HEK293 (cell line): ENCODE measurements at regions of chr1 and their contacts with region 1.

Region 1: GRCh38 chr1:24847995-24848881 is 81.8 kb downstream of the RUNX3 start:
- H3K4me3 ChIP-seq: peak overlapping the region; percentile 51
- H3K27ac ChIP-seq: peak overlapping the region; percentile 72; the same call in 1 of the 2 replicates
- H3K4me1 ChIP-seq: peaks cover 5% of the 10 kb centered on the region
- CTCF ChIP-seq: peak; percentile 95

Region 2: GRCh38 chr1:24830680-24831272 is 17.5 kb before region 1 on chr1:
- CTCF ChIA-PET with region 1: interaction called, 16 read pairs
- POLR2A ChIA-PET with region 1: no interaction called
- H3K4me3 ChIP-seq: no peak overlapping the region
- H3K27ac ChIP-seq: no peak overlapping the region
- H3K4me1 ChIP-seq: peaks cover 21% of the 10 kb centered on the region
- CTCF ChIP-seq: no peak; the same call in 1 of the 2 replicates

Region 3: DNA sequence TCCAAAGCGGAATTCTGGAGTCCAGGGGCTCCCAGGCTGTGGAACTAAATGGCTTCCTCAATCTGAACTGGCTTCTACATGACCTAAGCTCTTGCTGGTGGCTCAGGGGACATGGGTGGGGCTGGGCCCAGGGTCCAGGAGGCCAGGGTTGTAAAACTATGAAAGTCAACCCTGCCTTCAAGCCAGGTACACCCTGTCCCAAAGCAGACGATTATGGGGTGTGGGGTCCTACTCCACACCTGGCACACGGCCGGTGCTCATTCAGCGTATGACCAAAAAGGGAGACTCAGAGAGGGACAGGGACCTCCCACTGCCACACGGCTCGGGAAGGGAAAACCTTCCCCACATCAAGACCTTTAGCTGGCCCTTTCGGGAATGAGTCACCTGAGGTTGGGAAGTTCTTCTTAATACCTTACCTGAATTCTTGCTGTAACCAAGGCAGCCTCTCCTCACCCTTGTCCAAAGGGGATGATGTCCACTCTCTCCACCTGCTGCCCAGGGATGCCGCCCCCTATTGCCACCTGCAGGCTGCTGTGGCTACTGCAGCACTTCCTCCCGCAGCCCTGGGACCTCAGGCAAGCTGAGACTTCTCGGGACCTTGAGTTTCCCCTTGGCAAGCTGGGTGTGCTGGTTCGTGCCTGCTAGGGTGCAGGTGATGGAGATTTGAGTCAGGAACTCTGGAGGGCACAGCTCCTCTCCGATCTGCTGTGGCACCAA is 49.7 kb after region 1 on chr1:
- CTCF ChIA-PET with region 1: interaction called, 15 read pairs
- POLR2A ChIA-PET with region 1: no interaction called
- H3K4me3 ChIP-seq: no peak overlapping the region
- H3K27ac ChIP-seq: no peak overlapping the region
- H3K4me1 ChIP-seq: no peaks in the 10 kb centered on the region
- CTCF ChIP-seq: peak; percentile 83

Region 4: GRCh38 chr1:25037174-25038074 is 189.2 kb after region 1 on chr1:
- CTCF ChIA-PET with region 1: interaction called, 28 read pairs
- POLR2A ChIA-PET with region 1: no interaction called
- H3K4me3 ChIP-seq: no peak overlapping the region
- H3K27ac ChIP-seq: no peak overlapping the region
- H3K4me1 ChIP-seq: no peaks in the 10 kb centered on the region
- CTCF ChIP-seq: peak; percentile 45; the same call in 1 of the 2 replicates

Region 5: DNA sequence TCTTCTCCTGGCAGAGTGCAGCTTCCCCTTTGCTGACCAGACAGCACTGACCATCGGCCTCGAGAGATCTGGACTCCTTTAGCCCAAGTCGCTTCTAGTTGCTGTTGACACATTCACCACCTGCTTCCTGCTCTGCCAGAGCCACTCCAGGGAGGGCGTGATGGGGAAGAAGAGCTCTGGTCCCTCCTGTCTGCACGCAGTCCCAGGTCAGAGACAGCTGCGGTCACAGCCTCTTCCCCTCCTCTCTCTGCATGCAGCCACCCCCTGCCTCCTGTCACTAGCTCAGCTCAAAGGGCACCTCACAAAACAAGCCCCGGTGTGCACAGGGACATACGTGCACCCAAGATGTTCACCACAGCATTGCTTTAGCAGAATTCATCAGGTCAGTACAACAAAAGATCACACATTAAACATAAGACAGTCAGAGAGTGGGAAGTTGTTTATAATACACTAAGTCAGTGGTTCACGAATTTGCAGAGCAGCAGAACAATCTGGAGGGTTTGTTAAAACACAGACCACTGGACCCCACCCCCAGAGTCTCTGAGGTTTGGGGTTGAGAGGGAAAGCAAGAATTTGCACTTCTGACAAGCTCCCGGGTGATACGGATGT is 251.2 kb after region 1 on chr1:
- CTCF ChIA-PET with region 1: interaction called, 39 read pairs
- POLR2A ChIA-PET with region 1: no interaction called
- H3K4me3 ChIP-seq: no peak overlapping the region
- H3K27ac ChIP-seq: no peak overlapping the region
- H3K4me1 ChIP-seq: no peaks in the 10 kb centered on the region
- CTCF ChIP-seq: no peak

Region 6: DNA sequence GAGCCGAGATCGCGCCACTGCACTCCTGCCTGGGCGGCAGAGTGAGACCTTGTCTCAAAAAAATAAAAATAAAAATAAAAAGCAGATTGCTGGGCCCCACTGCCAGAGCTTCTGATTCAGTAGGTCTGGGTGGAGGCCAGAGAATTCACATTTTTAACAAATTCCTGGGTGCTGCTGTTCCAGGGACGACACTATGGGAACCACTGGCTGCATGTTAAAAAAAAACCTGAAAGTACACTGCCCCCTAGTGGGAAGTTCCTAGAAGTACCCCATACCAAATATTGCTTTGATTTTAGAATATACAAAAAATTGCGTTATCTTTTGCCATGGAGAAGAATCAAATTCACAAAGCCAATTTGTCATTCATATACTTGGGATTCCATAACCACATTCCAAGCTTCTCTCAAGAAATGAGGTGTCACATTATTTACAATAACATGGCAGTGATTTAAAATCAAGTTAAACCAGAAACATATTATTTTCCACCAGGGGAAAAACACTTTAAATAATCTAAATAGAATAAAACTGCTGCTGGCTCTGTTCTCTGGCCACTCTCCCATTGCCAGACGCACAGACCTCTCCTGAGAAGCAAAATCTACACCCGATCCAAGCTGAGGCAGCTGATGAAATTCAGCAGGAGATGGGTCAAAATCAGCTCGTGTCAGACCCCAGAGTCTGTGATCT is 356.7 kb after region 1 on chr1:
- CTCF ChIA-PET with region 1: interaction called, 14 read pairs
- POLR2A ChIA-PET with region 1: no interaction called
- H3K4me3 ChIP-seq: no peak overlapping the region
- H3K27ac ChIP-seq: no peak overlapping the region
- H3K4me1 ChIP-seq: no peaks in the 10 kb centered on the region
- CTCF ChIP-seq: no peak

Region 7: DNA sequence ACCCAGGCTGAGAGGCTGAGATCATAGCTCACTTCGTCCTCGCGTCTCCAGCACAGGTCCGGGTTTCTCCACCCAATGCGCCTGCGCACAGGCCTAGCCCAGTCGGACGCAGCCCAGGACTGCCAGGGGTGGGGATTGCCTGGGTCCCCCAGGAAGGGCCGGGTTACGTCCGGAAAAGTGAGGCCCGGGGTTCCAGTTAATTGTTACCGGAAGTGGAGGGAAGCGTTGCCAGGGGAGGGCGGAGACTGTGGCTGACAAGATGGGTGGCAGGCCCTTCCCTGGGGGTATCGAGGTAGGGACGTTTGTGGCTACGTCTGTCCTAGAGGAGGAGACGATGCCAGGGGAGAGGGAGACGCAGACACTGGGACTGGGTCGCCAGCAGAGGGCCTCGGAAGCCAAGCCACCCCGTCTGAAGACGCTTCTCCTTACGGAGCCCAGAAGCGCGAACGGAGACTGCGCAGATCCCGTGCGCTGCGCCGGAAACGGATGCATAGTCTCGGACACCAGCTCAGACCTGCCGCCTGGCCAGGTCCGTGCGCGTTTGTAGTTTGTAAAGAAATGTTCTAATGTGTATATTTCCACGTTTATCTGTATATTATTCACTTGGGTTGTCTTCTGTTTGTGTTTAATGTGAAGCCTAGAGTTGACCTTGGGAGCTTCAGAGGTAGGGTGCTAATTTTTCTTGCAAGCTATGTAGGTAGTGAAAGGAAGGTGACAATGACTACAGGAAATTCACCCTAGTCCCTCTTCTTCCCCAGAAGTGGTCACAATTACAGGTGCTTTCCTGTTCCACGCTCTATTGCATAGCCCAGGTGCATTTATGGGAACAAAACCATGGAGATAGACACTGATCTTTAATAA is 391.7 kb after region 1 on chr1:
- CTCF ChIA-PET with region 1: no interaction called
- POLR2A ChIA-PET with region 1: interaction called, 10 read pairs
- H3K4me3 ChIP-seq: peak overlapping the region; percentile 57
- H3K27ac ChIP-seq: peak overlapping the region; percentile 76
- H3K4me1 ChIP-seq: peaks cover 6% of the 10 kb centered on the region; the same call in 1 of the 2 replicates
- CTCF ChIP-seq: peak; percentile 95